IMR-90 (cell line): ENCODE measurements at regions of chr3 and their contacts with region 1.

Region 1: GRCh38 chr3:1318296-1319005 is 225.6 kb downstream of the CNTN6 start:
- DNase-seq: no peak
- ATAC-seq: no peak
- H3K4me3 ChIP-seq: no peak overlapping the region
- H3K27ac ChIP-seq: no peak overlapping the region
- H3K4me1 ChIP-seq: no peaks in the 10 kb centered on the region
- H3K27me3 ChIP-seq: no peaks in the 10 kb centered on the region
- CTCF ChIP-seq: no peak
- POLR2A ChIP-seq: no peak
- RAD21 ChIP-seq: no peak

Region 2: DNA sequence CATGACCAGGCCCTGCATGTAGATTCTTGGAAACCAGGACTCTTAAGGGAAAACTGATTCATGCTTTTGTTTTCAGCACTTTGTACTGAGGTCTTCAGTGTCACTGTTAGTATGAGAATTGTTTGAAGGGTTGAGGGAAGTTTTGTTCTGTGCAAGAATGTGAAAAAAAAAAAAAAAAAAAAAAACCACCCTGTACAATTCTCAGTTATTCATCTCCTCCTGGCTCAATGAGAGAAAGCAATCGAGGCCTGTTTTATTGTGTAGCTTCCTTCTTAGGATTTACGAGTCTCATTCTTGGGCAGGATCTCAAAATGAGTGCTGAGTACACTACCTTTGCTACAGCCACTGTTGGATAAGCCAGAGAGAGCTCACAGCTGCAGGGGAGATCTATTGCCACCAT is 1249.7 kb after region 1 on chr3:
- CTCF ChIA-PET with region 1: no interaction called
- POLR2A ChIA-PET with region 1: interaction called, 17 read pairs
- dilution Hi-C with region 1: no loop called
- in situ Hi-C with region 1: no loop called
- intact Hi-C with region 1: no loop called
- DNase-seq: no peak
- ATAC-seq: no peak
- H3K4me3 ChIP-seq: no peak overlapping the region
- H3K27ac ChIP-seq: no peak overlapping the region
- H3K4me1 ChIP-seq: no peaks in the 10 kb centered on the region
- H3K27me3 ChIP-seq: no peaks in the 10 kb centered on the region
- CTCF ChIP-seq: no peak
- POLR2A ChIP-seq: no peak
- RAD21 ChIP-seq: no peak